ENCODE measurements at regions of chr3 and their contacts with region 1.

Region 1: GRCh38 chr3:17227472-17227871 is 342.7 kb downstream of the PLCL2 start:
- DNase-seq: no peak
- ATAC-seq: no peak
- H3K4me3 ChIP-seq: no peak overlapping the region
- H3K4me3 Mint-ChIP-seq: no peak overlapping the region
- H3K27ac ChIP-seq: no peak overlapping the region
- H3K27ac Mint-ChIP-seq: no peak overlapping the region
- H3K4me1 ChIP-seq: no peaks in the 10 kb centered on the region
- H3K4me1 Mint-ChIP-seq: no peaks in the 10 kb centered on the region
- H3K27me3 ChIP-seq: no peaks in the 10 kb centered on the region
- H3K27me3 Mint-ChIP-seq: no peaks in the 10 kb centered on the region
- CTCF ChIP-seq: no peak

Region 2: GRCh38 chr3:16790432-16791400 is 436.8 kb before region 1 on chr3:
- CTCF ChIA-PET with region 1: no interaction called
- POLR2A ChIA-PET with region 1: no interaction called
- intact Hi-C with region 1: no loop called
- DNase-seq: no peak
- ATAC-seq: no peak
- H3K4me3 ChIP-seq: no peak overlapping the region
- H3K4me3 Mint-ChIP-seq: no peak overlapping the region
- H3K27ac ChIP-seq: no peak overlapping the region
- H3K27ac Mint-ChIP-seq: no peak overlapping the region
- H3K4me1 ChIP-seq: no peaks in the 10 kb centered on the region
- H3K4me1 Mint-ChIP-seq: peaks cover 6% of the 10 kb centered on the region
- H3K27me3 ChIP-seq: no peaks in the 10 kb centered on the region
- H3K27me3 Mint-ChIP-seq: no peaks in the 10 kb centered on the region
- CTCF ChIP-seq: no peak

Region 3: DNA sequence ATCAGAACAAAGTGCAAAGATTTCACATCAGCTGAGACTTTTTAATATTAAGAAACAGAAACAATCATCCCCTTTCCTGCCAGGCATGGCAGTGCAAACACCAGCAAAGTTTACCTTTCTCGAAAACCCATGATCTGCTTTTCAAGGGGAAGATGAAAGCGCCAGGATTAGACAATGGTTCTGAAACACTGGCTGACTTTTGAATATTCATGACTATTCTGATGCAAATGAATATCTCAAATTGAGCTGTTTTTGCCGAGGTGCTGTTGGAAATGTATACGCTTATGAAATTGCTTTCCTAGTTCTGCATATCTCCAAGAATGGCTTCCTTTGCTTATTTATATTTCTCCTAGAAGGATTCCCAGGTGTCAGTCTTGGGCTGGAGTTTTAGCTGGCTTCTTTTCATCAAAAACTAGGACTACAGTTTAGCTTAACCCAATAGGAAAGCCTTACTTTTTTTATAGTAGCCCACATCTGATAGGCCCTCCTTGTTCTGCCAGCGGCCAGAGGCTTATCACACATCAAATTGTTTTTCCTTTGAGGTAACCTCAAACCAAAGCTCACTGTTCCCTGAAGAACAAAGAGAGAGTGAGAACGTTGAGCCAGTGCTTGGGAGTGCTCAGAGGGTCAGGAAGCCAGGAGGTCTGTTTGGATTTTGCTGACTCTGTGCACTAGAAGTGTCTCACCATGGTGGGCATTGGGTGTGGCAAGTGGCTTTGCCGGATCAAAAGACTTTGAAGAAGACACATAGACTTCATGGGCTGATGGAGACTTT is 416.7 kb before region 1 on chr3:
- CTCF ChIA-PET with region 1: no interaction called
- POLR2A ChIA-PET with region 1: no interaction called
- intact Hi-C with region 1: loop called in 1 of 2 experiments (anchors 5 kb)
- DNase-seq: peak in 3 of 14 experiments; percentile 19 to 50 (median 26)
- ATAC-seq: peak; percentile 29
- H3K4me3 ChIP-seq: no peak overlapping the region
- H3K4me3 Mint-ChIP-seq: no peak overlapping the region
- H3K27ac ChIP-seq: no peak overlapping the region
- H3K27ac Mint-ChIP-seq: no peak overlapping the region
- H3K4me1 ChIP-seq: peaks cover 18% of the 10 kb centered on the region
- H3K4me1 Mint-ChIP-seq: peaks cover 29% of the 10 kb centered on the region
- H3K27me3 ChIP-seq: no peaks in the 10 kb centered on the region
- H3K27me3 Mint-ChIP-seq: no peaks in the 10 kb centered on the region
- CTCF ChIP-seq: no peak

Region 4: GRCh38 chr3:16928386-16929132 is 298.9 kb before region 1 on chr3:
- CTCF ChIA-PET with region 1: no interaction called
- POLR2A ChIA-PET with region 1: no interaction called
- intact Hi-C with region 1: no loop called
- DNase-seq: no peak
- ATAC-seq: no peak
- H3K4me3 ChIP-seq: no peak overlapping the region
- H3K4me3 Mint-ChIP-seq: peak overlapping the region; percentile 32
- H3K27ac ChIP-seq: no peak overlapping the region
- H3K27ac Mint-ChIP-seq: peak overlapping the region; percentile 11
- H3K4me1 ChIP-seq: peaks cover 27% of the 10 kb centered on the region
- H3K4me1 Mint-ChIP-seq: peaks cover 84% of the 10 kb centered on the region
- H3K27me3 ChIP-seq: no peaks in the 10 kb centered on the region
- H3K27me3 Mint-ChIP-seq: no peaks in the 10 kb centered on the region
- CTCF ChIP-seq: no peak

Measured in CD4-positive, alpha-beta T cell (primary cell).